ENCODE measurements at regions of chr10 and their contacts with region 1.

Region 1: GRCh38 chr10:94088926-94089381 is 95.2 kb downstream of the PLCE1 start:
- DNase-seq: no peak
- H3K4me3 ChIP-seq: peak overlapping the region in 4 of 8 donors; percentile 9 to 38 (median 22)
- H3K27ac ChIP-seq: peak overlapping the region in 1 of 8 donors; percentile 18
- H3K4me1 ChIP-seq: peaks cover 0 to 17% (median 4%) of the 10 kb centered on the region in 6 donors
- H3K27me3 ChIP-seq: no peaks in the 10 kb centered on the region
- CTCF ChIP-seq: no peak
- POLR2A ChIP-seq: no peak

Region 2: DNA sequence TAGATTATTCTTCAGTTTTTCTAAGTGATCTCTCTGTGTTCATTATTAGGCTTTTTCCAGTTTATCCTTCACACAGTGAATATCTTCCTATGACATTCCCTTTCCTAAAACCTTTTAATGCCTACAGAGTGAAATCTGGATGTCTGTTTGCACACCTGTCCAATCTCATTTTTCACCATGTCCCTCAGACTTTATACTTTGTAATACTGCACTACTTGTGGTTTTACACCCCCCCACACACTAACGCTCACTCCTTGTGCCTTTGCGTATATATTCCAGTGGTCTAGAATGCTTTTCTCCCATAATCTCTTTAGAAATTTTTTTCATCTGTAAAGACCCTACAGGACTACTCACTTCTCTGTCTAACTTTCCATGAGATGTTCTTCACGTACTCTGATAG is 1142.5 kb before region 1 on chr10:
- intact Hi-C with region 1: no loop called
- DNase-seq: no peak
- H3K4me3 ChIP-seq: no peak overlapping the region
- H3K27ac ChIP-seq: no peak overlapping the region
- H3K4me1 ChIP-seq: no peaks in the 10 kb centered on the region
- H3K27me3 ChIP-seq: no peaks in the 10 kb centered on the region
- CTCF ChIP-seq: no peak
- POLR2A ChIP-seq: no peak

Region 3: DNA sequence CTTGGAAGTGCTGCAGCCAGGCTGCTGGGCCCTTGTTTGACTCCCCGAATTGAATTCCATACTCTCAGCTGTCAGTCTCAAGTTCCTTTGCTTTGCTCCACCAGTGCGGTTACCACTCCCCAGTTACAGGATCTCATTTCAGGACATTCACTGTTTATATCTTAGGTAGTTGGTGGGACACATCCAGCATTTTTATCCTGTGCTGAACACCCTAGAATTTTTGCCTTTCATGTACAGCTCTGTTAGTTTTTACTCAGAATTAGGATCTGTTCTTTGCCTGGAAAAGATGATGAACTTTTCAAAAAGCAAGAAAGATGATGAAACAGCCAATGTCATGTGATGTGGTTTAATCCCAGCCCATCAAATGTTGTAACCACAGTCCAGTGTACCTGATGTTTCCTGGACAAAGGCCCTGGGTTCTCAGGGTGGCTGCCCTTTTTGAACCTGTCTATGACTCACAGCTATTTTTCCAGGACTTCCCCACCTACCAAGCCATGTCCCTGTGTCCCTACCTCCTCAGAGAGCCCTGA is 124.1 kb after region 1 on chr10:
- intact Hi-C with region 1: loop called (anchors 10 kb)
- DNase-seq: no peak
- H3K4me3 ChIP-seq: no peak overlapping the region
- H3K27ac ChIP-seq: peak overlapping the region in 5 of 8 donors; percentile 15 to 41 (median 36)
- H3K4me1 ChIP-seq: peaks cover 0 to 15% (median 5%) of the 10 kb centered on the region in 6 donors
- H3K27me3 ChIP-seq: no peaks in the 10 kb centered on the region
- CTCF ChIP-seq: no peak
- POLR2A ChIP-seq: no peak

Measured in spleen (tissue), 13 donors.